GM13976 (cell line): ENCODE measurements at regions of chr1 and their contacts with region 1.

Region 1: DNA sequence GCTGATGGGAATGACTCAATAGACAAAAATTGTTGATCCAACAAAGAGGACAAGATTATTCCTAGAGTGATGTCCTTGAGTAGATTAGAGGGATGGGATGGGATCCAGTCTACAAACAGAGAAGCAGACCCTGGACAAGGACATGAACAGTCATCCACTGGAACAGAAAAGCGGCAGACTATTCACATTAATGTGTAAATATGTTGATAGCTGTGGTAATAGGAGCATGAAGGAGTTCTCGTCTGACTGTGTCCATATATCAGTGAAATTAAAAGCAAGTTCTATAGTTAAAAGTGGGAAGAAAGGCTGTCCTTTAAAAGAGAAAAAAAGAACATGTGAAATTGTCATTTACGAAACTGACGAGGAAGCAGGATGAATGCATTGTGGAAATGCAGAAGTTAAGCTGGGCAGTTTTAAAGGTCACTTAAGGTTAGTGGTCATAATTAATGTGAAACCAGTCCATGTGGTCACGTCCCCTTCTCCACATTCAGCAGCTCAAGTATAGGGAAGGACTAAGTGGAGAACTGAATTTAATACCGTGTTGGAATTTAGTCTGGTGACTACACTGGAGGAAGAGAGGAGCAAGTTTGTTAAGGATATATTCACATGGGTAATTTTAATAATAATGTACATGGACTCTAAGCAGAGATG is 62.1 kb downstream of the PIK3R3 start:
- DNase-seq: no peak
- CTCF ChIP-seq: no peak

Region 2: DNA sequence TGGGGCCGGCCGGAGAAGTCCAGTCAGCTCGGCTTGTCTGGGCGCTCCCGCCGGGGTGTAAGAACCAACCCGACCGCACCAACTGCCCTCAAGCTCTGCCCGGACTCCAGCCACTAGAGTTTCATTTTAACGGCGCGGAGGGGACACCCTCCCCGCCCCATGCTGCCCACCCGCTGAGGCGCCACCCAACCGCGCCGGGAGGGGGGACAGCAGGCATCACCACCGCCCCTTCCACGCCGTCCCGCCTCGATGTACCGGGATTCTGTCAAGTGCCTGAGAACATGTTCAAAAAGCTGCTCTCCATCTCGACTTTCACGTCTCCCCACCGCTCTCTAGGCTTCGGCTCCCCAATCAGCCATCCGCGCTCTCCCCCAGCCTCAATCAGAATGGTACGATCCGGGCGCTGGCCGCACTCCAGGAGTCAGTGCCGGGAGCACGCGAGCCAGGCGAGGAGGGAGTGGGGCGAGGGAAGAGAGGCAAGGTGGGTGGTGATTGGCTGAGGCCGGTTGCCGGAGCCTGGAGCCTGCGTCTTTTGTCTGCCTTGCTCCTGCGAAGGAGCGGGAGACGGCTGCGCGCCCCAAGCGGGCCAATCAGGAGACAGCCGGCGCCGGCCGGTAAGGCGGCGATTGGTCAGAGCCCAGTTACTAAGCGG is 62.4 kb after region 1 on chr1 and contains the start of gene PIK3R3:
- in situ Hi-C with region 1: loop called (anchors 10 kb)
- DNase-seq: peak; percentile 97
- CTCF ChIP-seq: no peak

Region 3: DNA sequence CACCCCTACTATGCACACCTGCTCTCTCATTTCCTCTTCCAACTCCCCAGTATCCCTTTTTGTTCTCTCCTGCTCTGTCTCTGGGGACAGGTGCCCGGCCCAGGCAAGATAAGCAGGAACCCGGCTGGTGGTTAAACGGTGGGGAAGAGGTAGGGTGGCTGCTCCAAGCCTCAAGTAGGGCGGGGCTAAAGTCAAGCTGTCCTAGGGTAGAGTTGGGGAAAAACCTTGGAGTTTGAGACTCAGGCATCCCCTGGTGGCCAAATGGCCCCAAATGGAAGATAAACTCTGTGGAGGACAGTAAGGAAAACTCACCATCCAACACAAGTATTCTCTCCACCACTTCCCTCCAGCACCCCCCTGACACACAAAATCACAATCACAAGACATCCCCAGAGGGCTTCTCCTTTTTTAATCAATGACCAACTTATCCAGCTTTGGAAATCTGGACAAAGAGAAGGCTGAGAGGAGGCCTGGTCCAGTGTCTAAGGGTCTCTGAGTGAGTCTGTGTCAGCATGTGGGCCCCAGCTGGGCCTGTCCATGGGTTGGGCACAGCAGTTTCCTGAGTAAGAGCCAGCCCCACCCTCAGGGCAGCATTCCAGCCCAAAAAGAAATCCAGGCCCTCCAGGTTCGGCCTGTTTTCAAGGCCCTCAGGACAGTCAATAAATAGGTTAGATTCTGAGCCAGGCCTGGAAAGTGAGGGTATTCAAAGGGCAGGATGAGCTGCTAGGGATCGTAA is 118.2 kb after region 1 on chr1:
- in situ Hi-C with region 1: no loop called
- DNase-seq: no peak
- CTCF ChIP-seq: no peak